HEK293T (cell line): ENCODE measurements at regions of chr17 and their contacts with region 1.

Region 1: GRCh38 chr17:4249452-4250029 is 14.2 kb downstream of the ANKFY1 start:
- DNase-seq: peak; percentile 62

Region 2: DNA sequence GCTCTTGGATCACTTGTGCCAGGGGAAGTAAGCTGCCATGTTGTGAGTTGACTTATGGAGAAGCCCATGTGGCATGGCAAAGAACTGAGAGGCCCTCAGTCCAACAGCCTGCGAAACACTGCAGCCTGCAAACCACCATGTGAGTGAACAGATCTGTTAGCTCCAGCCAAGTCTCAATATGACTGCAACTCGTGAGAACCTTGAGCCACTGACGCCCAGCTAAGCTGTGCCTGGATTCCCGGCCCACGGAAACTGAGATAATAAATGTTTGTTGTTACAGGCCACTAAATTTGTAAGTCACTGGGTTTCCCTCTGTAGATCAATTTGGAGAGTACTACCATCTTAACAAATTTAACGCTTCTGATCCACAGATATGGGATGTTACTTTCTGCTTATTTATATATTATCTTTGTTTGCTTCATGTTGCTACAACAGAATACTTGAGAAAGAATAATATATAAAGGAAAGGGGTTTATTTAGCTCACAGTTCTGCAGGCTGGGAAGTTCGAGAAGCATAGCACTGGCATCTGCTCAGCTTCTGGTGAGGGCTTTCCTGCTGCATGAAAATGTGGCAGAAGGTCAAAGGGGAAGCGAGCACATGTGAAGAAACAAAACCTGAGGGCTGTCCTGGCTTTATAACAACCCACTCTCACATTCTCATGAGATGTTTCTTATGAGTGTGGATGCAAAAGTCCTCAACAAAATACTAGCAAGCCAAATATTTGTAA is 255.9 kb before region 1 on chr17:
- CTCF ChIA-PET with region 1: no interaction called
- POLR2A ChIA-PET with region 1: no interaction called
- DNase-seq: no peak

Region 3: GRCh38 chr17:4215882-4216570 is 33.5 kb before region 1 on chr17:
- CTCF ChIA-PET with region 1: interaction called, 11 read pairs
- POLR2A ChIA-PET with region 1: no interaction called
- DNase-seq: peak; percentile 25

Region 4: DNA sequence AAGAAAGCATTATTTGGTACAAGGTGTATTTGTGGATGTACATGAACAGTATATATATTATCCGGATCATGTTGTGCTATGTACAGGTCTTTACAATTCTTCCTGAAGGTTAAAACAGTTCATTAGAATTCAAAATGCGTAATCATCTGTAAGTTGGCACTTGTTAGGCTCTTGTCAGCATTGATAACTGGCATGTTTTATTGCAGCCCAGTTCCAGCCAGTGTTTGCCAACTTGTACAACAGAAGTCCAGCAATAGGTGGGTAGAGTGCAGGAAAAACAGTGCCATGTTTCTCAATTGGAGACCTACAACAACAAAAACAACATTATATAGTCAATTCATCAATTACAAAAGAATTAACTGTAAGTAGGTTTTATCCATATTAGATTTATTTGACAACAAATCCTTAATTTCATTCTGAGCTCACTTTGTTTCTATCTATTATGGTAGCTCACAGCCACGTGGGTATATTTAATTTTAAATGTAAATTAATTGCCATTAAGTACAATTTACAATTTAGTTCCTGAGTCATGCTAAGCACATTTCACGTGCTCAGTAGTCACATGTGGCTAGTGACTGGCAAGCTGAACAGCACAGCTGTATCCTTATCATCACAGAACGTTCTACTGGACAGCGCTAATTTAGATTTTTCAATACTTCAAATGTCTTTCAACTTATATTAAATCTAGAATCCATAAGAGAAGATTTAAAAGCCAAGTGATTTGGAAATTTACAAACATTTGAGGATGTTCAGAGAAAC is 22.9 kb after region 1 on chr17:
- CTCF ChIA-PET with region 1: no interaction called
- POLR2A ChIA-PET with region 1: no interaction called
- DNase-seq: no peak

Region 5: GRCh38 chr17:4310349-4311060 is 61.0 kb after region 1 on chr17:
- CTCF ChIA-PET with region 1: no interaction called
- POLR2A ChIA-PET with region 1: no interaction called
- DNase-seq: no peak